GM10248 (cell line): ENCODE measurements at regions of chr6 and their contacts with region 1.

Region 1: GRCh38 chr6:32933636-32934085 is 7.2 kb downstream of the HLA-DMB start:
- DNase-seq: peak; percentile 54
- CTCF ChIP-seq: peak; percentile 81

Region 2: GRCh38 chr6:32885698-32886286 is 47.9 kb before region 1 on chr6:
- CTCF ChIA-PET with region 1: interaction called, 13 read pairs
- POLR2A ChIA-PET with region 1: no interaction called
- DNase-seq: peak; percentile 63
- CTCF ChIP-seq: peak; percentile 50

Region 3: GRCh38 chr6:32906539-32906938 is 27.1 kb before region 1 on chr6:
- CTCF ChIA-PET with region 1: interaction called, 27 read pairs
- POLR2A ChIA-PET with region 1: no interaction called
- DNase-seq: no peak
- CTCF ChIP-seq: no peak

Region 4: DNA sequence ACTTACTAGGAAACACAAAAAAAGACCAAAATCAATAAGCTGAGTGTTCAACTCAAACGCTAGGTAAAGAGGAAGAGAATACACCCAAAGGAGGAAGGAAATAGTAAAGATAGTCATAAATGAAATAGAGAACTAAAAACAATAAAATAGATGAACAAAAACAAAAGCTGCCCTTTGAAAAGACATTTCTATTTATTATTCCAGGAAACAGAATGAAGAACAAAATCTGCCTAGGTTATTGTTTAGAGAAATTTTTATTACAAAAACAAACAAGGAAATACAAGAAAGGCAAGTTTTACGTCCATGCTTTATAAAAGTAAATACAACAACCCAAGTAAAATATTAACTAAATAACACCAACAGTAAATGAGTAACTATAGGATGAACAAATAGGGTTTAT is 12.9 kb before region 1 on chr6:
- CTCF ChIA-PET with region 1: interaction called, 49 read pairs
- POLR2A ChIA-PET with region 1: interaction called, 4 read pairs
- DNase-seq: no peak
- CTCF ChIP-seq: no peak